Gastrocnemius medialis (tissue), 4 donors: ENCODE measurements at regions of chr1 and their contacts with region 1.

Region 1: DNA sequence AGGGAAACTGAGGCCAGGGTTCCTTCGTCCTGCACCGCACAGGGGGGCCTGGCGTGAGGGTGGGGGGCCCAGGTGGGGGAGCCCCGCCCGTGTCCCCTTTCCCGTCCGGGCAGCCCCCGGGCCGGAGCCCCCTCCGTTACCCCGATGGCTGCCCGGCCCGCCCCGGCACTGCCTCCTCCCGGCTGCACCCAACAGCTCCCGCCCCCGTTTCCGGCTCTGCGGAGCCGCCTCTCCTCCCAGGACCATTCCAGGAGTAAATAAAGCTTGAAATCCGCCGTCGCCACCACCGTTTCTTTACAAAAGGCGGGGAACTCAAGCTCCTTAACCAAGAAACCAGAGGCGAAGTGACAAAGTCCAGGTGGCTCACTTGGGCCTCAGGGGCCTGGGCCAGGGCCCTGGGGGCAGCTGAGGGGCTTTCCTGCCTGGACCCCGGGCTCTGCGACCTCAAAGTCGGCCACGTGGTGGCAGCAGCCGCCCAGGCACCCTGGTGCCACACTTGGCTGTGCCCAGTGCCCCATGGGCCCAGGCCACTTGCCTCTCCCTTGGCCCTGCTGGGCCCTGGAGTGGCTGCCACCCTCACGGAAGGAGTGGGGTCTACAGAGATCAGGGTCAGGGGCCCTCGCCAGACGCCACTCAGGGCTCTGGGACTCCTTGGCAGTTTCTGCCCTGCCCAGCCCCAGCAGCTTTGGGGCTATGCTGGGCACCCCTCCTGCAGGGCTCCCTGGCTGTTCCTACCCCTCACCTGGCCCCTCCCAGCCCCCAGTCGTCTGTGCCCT is 514 bp upstream of the FAAP20 start:
- DNase-seq: peak; percentile 77 to 83
- ATAC-seq: peak; percentile 70 to 76
- H3K4me3 ChIP-seq: peak overlapping the region; percentile 58 to 98 (median 78)
- H3K27ac ChIP-seq: peak overlapping the region; percentile 97 to 100 (median 98)
- H3K4me1 ChIP-seq: peaks cover 39 to 62% of the 10 kb centered on the region in 2 donors
- H3K27me3 ChIP-seq: no peaks in the 10 kb centered on the region
- CTCF ChIP-seq: peak; percentile 93 to 99 (median 98)
- POLR2A ChIP-seq: peak in 1 of 2 donors; percentile 26

Region 2: GRCh38 chr1:2213576-2214505 is 18.8 kb after region 1 on chr1:
- in situ Hi-C with region 1: no loop called
- intact Hi-C with region 1: no loop called
- DNase-seq: peak in 1 of 2 donors; percentile 72
- ATAC-seq: peak; percentile 54 to 60
- H3K4me3 ChIP-seq: peak overlapping the region; percentile 23 to 45 (median 36)
- H3K27ac ChIP-seq: peak overlapping the region; percentile 67 to 91 (median 86)
- H3K4me1 ChIP-seq: peaks cover 19 to 35% of the 10 kb centered on the region in 2 donors
- H3K27me3 ChIP-seq: no peaks in the 10 kb centered on the region
- CTCF ChIP-seq: no peak
- POLR2A ChIP-seq: peak in 1 of 2 donors; percentile 40

Region 3: GRCh38 chr1:2227346-2228153 is 32.5 kb after region 1 on chr1:
- in situ Hi-C with region 1: no loop called
- intact Hi-C with region 1: loop called (anchors 2 kb)
- DNase-seq: peak; percentile 95
- ATAC-seq: peak; percentile 78 to 80
- H3K4me3 ChIP-seq: peak overlapping the region; percentile 67 to 92 (median 78)
- H3K27ac ChIP-seq: peak overlapping the region; percentile 92 to 100 (median 98)
- H3K4me1 ChIP-seq: peaks cover 32 to 33% of the 10 kb centered on the region in 2 donors
- H3K27me3 ChIP-seq: no peaks in the 10 kb centered on the region
- CTCF ChIP-seq: peak in 3 of 5 experiments; percentile 14 to 51 (median 31)
- POLR2A ChIP-seq: peak; percentile 85 to 90

Region 4: GRCh38 chr1:2381741-2382620 is 186.9 kb after region 1 on chr1:
- in situ Hi-C with region 1: loop called in 2 of 4 experiments (anchors 5 to 10 kb)
- intact Hi-C with region 1: loop called (anchors 1 kb)
- DNase-seq: peak; percentile 41 to 67
- ATAC-seq: peak; percentile 64 to 81
- H3K4me3 ChIP-seq: no peak overlapping the region
- H3K27ac ChIP-seq: no peak overlapping the region
- H3K4me1 ChIP-seq: peaks cover 0 to 5% of the 10 kb centered on the region in 2 donors
- H3K27me3 ChIP-seq: no peaks in the 10 kb centered on the region
- CTCF ChIP-seq: peak; percentile 72 to 92 (median 88)
- POLR2A ChIP-seq: no peak

Region 5: GRCh38 chr1:2545759-2546514 is 350.9 kb after region 1 on chr1:
- in situ Hi-C with region 1: loop called in 1 of 4 experiments (anchors 25 kb)
- intact Hi-C with region 1: loop called (anchors 5 kb)
- DNase-seq: peak; percentile 73 to 76
- ATAC-seq: peak in 1 of 2 donors; percentile 55
- H3K4me3 ChIP-seq: peak overlapping the region; percentile 53 to 63 (median 56)
- H3K27ac ChIP-seq: peak overlapping the region; percentile 86 to 94 (median 88)
- H3K4me1 ChIP-seq: peaks cover 14 to 35% of the 10 kb centered on the region in 2 donors
- H3K27me3 ChIP-seq: peaks cover 14 to 35% (median 29%) of the 10 kb centered on the region in 3 donors
- CTCF ChIP-seq: no peak
- POLR2A ChIP-seq: peak in 1 of 2 donors; percentile 13